ENCODE measurements at regions of chr1 and their contacts with region 1.

Region 1: GRCh38 chr1:151098126-151098525 is 27.6 kb downstream of the GABPB2 start:
- DNase-seq: no peak
- ATAC-seq: no peak
- H3K4me3 Mint-ChIP-seq: no peak overlapping the region
- H3K27ac Mint-ChIP-seq: no peak overlapping the region
- H3K4me1 Mint-ChIP-seq: no peaks in the 10 kb centered on the region
- H3K27me3 Mint-ChIP-seq: no peaks in the 10 kb centered on the region; the same call in 1 of the 2 replicates
- CTCF ChIP-seq: no peak

Region 2: DNA sequence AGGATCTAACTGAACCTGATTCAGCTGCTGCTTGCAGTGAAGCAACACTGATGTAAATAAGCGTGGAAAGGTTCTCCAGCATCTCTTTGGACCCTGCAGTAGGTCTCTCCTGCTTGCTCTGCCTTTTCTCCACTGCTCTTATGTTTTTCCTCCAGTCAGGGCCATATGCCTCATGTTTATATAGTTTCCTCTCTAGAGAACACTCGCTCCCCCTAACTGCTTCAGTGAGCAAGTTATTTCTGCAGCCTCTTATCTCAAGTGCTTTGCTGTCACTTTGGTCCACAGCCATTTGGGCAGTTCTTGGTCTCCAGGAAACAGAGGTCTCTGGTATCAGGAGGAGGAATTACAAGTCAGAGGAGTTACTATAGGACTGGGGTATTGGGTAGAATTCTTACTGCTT is 84.6 kb before region 1 on chr1:
- CTCF ChIA-PET with region 1: no interaction called
- POLR2A ChIA-PET with region 1: no interaction called
- DNase-seq: no peak
- ATAC-seq: no peak
- H3K4me3 Mint-ChIP-seq: no peak overlapping the region
- H3K27ac Mint-ChIP-seq: no peak overlapping the region
- H3K4me1 Mint-ChIP-seq: peaks cover 7% of the 10 kb centered on the region
- H3K27me3 Mint-ChIP-seq: no peaks in the 10 kb centered on the region
- CTCF ChIP-seq: no peak

Region 3: DNA sequence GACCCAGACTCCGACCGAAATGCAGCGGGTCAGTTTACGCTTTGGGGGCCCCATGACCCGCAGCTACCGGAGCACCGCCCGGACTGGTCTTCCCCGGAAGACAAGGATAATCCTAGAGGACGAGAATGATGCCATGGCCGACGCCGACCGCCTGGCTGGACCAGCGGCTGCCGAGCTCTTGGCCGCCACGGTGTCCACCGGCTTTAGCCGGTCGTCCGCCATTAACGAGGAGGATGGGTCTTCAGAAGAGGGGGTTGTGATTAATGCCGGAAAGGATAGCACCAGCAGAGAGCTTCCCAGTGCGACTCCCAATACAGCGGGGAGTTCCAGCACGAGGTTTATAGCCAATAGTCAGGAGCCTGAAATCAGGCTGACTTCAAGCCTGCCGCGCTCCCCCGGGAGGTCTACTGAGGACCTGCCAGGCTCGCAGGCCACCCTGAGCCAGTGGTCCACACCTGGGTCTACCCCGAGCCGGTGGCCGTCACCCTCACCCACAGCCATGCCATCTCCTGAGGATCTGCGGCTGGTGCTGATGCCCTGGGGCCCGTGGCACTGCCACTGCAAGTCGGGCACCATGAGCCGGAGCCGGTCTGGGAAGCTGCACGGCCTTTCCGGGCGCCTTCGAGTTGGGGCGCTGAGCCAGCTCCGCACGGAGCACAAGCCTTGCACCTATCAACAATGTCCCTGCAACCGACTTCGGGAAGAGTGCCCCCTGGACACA is 50.0 kb before region 1 on chr1:
- CTCF ChIA-PET with region 1: interaction called, 16 read pairs
- POLR2A ChIA-PET with region 1: interaction called, 3 read pairs
- DNase-seq: peak; percentile 76
- ATAC-seq: peak; percentile 35
- H3K4me3 Mint-ChIP-seq: peak overlapping the region; percentile 96
- H3K27ac Mint-ChIP-seq: peak overlapping the region; percentile 97
- H3K4me1 Mint-ChIP-seq: peaks cover 17% of the 10 kb centered on the region
- H3K27me3 Mint-ChIP-seq: no peaks in the 10 kb centered on the region
- CTCF ChIP-seq: peak; percentile 30; the same call in 1 of the 2 replicates

Region 4: GRCh38 chr1:151124763-151125403 is 26.8 kb after region 1 on chr1:
- CTCF ChIA-PET with region 1: interaction called, 23 read pairs
- POLR2A ChIA-PET with region 1: no interaction called
- DNase-seq: no peak
- ATAC-seq: peak; percentile 53
- H3K4me3 Mint-ChIP-seq: no peak overlapping the region
- H3K27ac Mint-ChIP-seq: peak overlapping the region; percentile 11; the same call in 1 of the 2 replicates
- H3K4me1 Mint-ChIP-seq: peaks cover 22% of the 10 kb centered on the region
- H3K27me3 Mint-ChIP-seq: no peaks in the 10 kb centered on the region; the same call in 1 of the 2 replicates
- CTCF ChIP-seq: no peak

Region 5: DNA sequence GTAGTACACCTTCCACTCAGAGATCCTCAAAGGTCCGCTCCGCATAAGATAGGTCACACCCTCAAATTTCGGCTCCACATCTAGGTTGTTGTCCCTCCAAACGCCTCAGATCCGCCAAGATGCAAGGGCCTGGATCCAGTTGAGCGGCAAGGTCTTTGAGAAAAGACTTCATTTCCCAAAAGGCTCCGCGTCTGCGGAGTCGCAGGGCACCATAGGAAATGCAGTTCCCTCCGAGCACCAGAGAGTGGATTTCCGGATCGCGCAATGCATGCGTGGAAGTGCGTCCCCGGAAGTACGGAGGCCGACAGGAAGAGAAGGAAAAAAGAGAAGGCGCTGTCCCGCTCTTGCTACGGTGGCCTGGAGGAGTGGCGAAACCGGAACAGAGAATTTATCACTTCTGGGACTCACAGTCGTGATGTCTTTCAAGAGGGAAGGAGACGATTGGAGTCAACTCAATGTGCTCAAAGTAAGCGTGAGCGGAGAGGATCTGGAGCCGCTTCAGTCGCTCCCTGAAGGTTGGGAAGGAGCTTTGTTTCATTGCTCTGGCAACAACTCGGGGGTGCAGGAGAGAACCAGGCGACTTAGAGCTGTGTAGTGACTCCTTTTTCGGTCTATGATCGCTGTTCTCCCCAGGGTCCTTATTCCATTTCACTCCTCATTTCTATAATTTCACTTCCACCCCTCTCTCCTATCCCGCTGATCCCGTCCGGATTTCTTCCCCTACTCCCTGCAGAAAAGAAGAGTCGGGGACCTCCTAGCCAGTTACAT is 67.8 kb after region 1 on chr1 and contains the starts of genes LYSMD1 and SCNM1:
- CTCF ChIA-PET with region 1: interaction called, 39 read pairs
- POLR2A ChIA-PET with region 1: no interaction called
- DNase-seq: peak; percentile 92
- ATAC-seq: peak; percentile 90
- H3K4me3 Mint-ChIP-seq: peak within 1 kb of the TSS; percentile 99
- H3K27ac Mint-ChIP-seq: peak within 1 kb of the TSS; percentile 99
- H3K4me1 Mint-ChIP-seq: peaks cover 15% of the 10 kb centered on the region
- H3K27me3 Mint-ChIP-seq: no peaks in the 10 kb centered on the region; the same call in 1 of the 2 replicates
- CTCF ChIP-seq: no peak
- total RNA-seq, gene LYSMD1: 6.3 to 7.8 TPM (median 6.9 TPM) in 3 replicates
- total RNA-seq, gene SCNM1: 35.3 to 45.3 TPM (median 35.8 TPM) in 3 replicates

Region 6: DNA sequence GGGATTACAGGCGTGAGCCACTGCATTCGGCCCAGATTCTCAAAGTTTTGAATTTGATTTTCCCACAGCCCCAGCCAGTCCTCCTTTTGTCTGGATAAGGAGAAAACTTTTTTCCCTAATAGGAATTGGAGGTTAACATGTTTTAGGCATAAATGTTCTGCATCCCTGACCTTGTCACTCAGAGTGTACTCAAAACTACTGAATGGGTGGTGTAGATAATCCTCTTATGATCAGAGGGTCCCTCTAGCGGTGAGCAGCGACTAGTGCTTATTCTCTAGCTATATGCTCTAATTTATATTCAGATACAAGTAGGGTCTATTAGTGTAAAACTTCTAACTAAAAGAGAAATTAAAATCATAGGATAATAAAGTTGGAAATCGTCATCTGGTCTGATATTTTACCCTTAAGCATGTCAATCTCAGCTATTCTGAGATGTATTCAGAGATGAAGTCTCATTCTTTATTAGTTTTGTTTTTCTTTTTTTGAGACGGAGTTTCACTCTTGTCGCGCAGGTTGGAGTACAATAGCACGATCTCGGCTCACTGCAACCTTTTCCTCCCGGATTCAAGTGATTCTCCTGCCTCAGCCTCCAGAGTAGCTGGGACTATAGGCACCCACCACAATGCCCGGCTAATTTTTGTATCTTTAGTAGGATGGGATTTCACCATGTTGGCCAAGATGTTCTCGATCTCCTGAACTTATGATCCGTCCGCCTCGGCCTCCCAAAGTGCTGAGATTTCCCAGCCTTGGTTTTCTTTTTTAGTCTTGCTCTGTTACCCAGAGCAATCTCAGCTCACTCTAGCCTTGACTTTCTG is 153.7 kb after region 1 on chr1:
- CTCF ChIA-PET with region 1: interaction called, 32 read pairs
- POLR2A ChIA-PET with region 1: no interaction called
- DNase-seq: peak; percentile 54
- ATAC-seq: peak; percentile 46
- H3K4me3 Mint-ChIP-seq: no peak overlapping the region
- H3K27ac Mint-ChIP-seq: 0 out of 2 replicates have a peak overlapping the region, but pooled peaks have one; percentile 63
- H3K4me1 Mint-ChIP-seq: peaks cover 9% of the 10 kb centered on the region
- H3K27me3 Mint-ChIP-seq: no peaks in the 10 kb centered on the region; the same call in 1 of the 2 replicates
- CTCF ChIP-seq: peak; percentile 58

Measured in WTC11 (cell line).